ENCODE measurements at regions of chr1 and their contacts with region 1.

Region 1: GRCh38 chr1:55071477-55071876 is 32.1 kb downstream of the PCSK9 start:
- DNase-seq: no peak
- ATAC-seq: peak in 1 of 2 donors; percentile 57

Region 2: DNA sequence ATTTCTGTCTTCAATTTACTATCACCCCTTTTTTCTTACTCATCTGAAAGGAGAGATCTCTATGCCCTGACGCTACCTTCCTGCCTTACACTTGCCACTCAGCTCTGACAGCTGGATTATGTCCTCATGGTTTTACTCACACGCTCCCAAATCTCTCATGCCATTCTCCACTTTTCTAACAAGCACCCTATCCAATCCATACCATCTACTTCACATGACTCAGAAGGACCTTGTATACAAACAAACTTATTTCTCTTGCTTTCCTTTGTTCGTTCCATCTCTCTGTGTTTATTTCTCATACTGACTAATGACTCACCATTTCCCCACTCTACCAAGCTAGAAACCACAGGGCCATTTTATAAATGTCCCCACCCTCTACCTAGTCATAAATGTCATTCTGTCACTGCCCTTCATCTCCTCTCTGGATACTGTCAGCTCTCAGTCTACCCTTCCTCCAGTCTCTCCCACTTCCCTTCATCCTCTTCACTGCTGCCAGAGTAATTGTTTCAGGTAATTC is 56.4 kb after region 1 on chr1:
- intact Hi-C with region 1: loop called in 1 of 2 experiments (anchors 10 kb)
- DNase-seq: no peak
- ATAC-seq: no peak